Activated B cell treated with CpG ODN at 0.5 μM for 24 hours (primary cell): ENCODE measurements at regions of chr17 and their contacts with region 1.

Region 1: GRCh38 chr17:77772461-77772897 is 186.0 kb upstream of the TNRC6C start:
- DNase-seq: peak; percentile 50
- ATAC-seq: peak; percentile 95
- H3K4me3 Mint-ChIP-seq: no peak overlapping the region
- H3K27ac Mint-ChIP-seq: no peak overlapping the region
- H3K4me1 Mint-ChIP-seq: peaks cover 11% of the 10 kb centered on the region
- H3K27me3 Mint-ChIP-seq: peaks cover 12% of the 10 kb centered on the region
- CTCF ChIP-seq: no peak

Region 2: GRCh38 chr17:77542551-77543490 is 229.7 kb before region 1 on chr17:
- CTCF ChIA-PET with region 1: interaction called, 3 read pairs
- POLR2A ChIA-PET with region 1: no interaction called
- intact Hi-C with region 1: loop called (anchors 10 kb)
- DNase-seq: peak; percentile 35
- ATAC-seq: peak; percentile 83
- H3K4me3 Mint-ChIP-seq: no peak overlapping the region
- H3K27ac Mint-ChIP-seq: no peak overlapping the region
- H3K4me1 Mint-ChIP-seq: no peaks in the 10 kb centered on the region
- H3K27me3 Mint-ChIP-seq: peaks cover 8% of the 10 kb centered on the region
- CTCF ChIP-seq: no peak

Region 3: GRCh38 chr17:77734341-77735080 is 38.0 kb before region 1 on chr17:
- CTCF ChIA-PET with region 1: no interaction called
- POLR2A ChIA-PET with region 1: no interaction called
- intact Hi-C with region 1: no loop called
- DNase-seq: peak; percentile 8
- ATAC-seq: no peak
- H3K4me3 Mint-ChIP-seq: no peak overlapping the region
- H3K27ac Mint-ChIP-seq: no peak overlapping the region
- H3K4me1 Mint-ChIP-seq: no peaks in the 10 kb centered on the region
- H3K27me3 Mint-ChIP-seq: peaks cover 27% of the 10 kb centered on the region
- CTCF ChIP-seq: no peak

Region 4: DNA sequence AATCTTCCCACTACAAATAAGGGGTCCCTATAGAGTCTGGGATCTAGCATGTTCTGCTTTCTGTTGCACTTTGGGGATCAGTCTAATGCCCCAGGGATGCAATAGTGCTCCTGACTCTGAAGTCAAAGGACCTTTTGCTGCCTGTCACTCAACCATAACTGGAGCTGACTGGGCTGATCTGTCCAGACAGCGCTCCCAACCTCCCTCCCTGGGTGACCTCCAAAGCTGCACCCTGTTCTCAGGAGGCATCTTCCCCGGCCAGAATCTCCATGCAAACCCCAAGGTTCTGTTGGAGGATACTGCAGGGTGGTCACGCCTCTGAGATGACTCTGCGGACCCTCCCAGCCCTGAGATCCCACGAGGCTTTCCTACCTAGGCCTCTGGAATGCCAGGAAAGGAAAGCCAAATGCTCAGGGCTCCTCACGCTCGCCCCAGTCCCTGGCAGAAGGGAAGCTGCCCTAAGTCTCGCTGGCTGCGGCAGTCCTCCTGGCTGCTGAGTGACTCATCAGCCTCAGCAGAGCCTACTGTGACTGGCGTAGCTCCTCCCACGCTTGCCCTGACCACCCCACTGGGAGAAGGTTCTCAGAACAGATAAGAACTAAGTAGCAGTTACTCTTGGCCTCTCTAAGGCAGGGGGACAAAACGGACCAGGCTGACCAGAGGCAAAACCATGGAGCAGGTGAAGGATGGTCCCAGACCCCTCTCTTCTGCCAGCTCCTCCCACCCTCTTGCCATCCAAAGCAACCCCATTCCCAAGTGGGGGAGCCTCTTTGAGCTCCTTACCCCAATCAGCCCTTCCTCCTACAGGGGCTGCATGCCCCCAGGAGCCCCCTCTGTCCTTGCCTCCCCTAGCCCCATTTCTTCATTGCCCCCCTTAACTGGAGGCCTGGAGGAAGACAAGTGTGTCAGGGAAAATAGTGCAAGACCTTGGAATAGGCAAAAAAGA is 62.0 kb after region 1 on chr17:
- CTCF ChIA-PET with region 1: no interaction called
- POLR2A ChIA-PET with region 1: no interaction called
- intact Hi-C with region 1: no loop called
- DNase-seq: peak; percentile 16
- ATAC-seq: peak; percentile 97
- H3K4me3 Mint-ChIP-seq: no peak overlapping the region
- H3K27ac Mint-ChIP-seq: no peak overlapping the region
- H3K4me1 Mint-ChIP-seq: peaks cover 17% of the 10 kb centered on the region
- H3K27me3 Mint-ChIP-seq: peaks cover 49% of the 10 kb centered on the region
- CTCF ChIP-seq: no peak

Region 5: DNA sequence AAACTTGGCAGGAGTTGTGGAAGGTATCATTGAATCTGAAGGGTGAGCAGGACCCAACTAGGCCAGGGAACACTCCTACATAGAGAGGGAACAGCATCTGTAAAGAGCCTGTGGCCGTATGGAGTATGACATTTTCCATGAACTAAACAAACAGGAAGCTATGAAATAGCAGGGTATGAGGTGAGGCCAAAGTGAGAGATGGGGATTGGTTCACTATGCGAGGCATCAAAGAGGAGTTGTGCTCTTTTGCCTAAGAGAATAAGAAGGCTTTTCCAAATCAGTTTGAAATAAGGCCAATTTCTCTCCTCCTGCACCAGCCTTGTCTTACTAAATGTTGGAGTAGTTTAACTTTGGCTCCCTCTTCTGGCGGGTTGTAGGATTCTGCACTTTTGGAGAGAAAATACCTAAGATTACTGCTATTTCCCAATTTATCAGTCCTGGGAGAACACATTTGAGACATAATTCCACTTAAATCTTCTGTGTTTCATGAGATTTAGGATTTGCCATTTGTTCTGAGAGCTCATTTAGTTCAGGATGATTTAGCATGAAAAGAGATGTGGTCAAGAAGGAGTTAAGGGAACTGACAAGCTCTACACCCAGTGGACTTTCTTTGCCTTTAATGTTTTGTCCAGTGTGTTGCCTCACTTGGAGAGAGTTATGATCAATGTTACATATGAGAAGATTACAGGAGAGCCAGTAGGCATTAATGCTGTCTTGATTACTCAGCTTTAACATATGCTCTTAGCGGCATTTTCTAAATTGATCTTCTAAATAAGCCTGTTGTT is 241.4 kb after region 1 on chr17:
- CTCF ChIA-PET with region 1: interaction called, 89 read pairs
- POLR2A ChIA-PET with region 1: no interaction called
- intact Hi-C with region 1: loop called (anchors 1 kb)
- DNase-seq: no peak
- ATAC-seq: peak; percentile 54
- H3K4me3 Mint-ChIP-seq: no peak overlapping the region
- H3K27ac Mint-ChIP-seq: no peak overlapping the region
- H3K4me1 Mint-ChIP-seq: peaks cover 2% of the 10 kb centered on the region
- H3K27me3 Mint-ChIP-seq: no peaks in the 10 kb centered on the region
- CTCF ChIP-seq: peak; percentile 52